CD14-positive monocyte (primary cell): ENCODE measurements at regions of chr9 and their contacts with region 1.

Region 1: GRCh38 chr9:93566408-93567270 is 9.7 kb upstream of the PHF2 start:
- DNase-seq: peak; percentile 96
- H3K4me3 ChIP-seq: peak overlapping the region; percentile 59 to 75 (median 65)
- H3K4me3 Mint-ChIP-seq: peak overlapping the region; percentile 79 to 90
- H3K27ac ChIP-seq: peak overlapping the region; percentile 91 to 99
- H3K27ac Mint-ChIP-seq: peak overlapping the region; percentile 90 to 96 (median 96)
- H3K4me1 ChIP-seq: peaks cover 30 to 34% of the 10 kb centered on the region in 2 donors
- H3K4me1 Mint-ChIP-seq: peaks cover 29% of the 10 kb centered on the region
- H3K27me3 ChIP-seq: no peaks in the 10 kb centered on the region
- H3K27me3 Mint-ChIP-seq: peaks cover 0 to 2% (median 1%) of the 10 kb centered on the region in 3 donors
- CTCF ChIP-seq: peak; percentile 92

Region 2: GRCh38 chr9:92669890-92670708 is 896.5 kb before region 1 on chr9 and contains the start of gene IPPK:
- intact Hi-C with region 1: loop called in 1 of 2 experiments (anchors 10 kb)
- DNase-seq: peak; percentile 98 to 99 (median 99)
- H3K4me3 ChIP-seq: peak within 1 kb of the TSS; percentile 69 to 97 (median 86)
- H3K4me3 Mint-ChIP-seq: peak within 1 kb of the TSS; percentile 92 to 95
- H3K27ac ChIP-seq: peak within 1 kb of the TSS; percentile 68 to 98
- H3K27ac Mint-ChIP-seq: peak within 1 kb of the TSS; percentile 92 to 97 (median 94)
- H3K4me1 ChIP-seq: peaks cover 13 to 23% of the 10 kb centered on the region in 2 donors
- H3K4me1 Mint-ChIP-seq: peaks cover 30% of the 10 kb centered on the region
- H3K27me3 ChIP-seq: no peaks in the 10 kb centered on the region
- H3K27me3 Mint-ChIP-seq: peaks cover 0 to 1% (median 0%) of the 10 kb centered on the region in 3 donors
- CTCF ChIP-seq: no peak
- polyA plus RNA-seq, gene IPPK: 1.9 to 11.6 (median 3.2) TPM

Region 3: DNA sequence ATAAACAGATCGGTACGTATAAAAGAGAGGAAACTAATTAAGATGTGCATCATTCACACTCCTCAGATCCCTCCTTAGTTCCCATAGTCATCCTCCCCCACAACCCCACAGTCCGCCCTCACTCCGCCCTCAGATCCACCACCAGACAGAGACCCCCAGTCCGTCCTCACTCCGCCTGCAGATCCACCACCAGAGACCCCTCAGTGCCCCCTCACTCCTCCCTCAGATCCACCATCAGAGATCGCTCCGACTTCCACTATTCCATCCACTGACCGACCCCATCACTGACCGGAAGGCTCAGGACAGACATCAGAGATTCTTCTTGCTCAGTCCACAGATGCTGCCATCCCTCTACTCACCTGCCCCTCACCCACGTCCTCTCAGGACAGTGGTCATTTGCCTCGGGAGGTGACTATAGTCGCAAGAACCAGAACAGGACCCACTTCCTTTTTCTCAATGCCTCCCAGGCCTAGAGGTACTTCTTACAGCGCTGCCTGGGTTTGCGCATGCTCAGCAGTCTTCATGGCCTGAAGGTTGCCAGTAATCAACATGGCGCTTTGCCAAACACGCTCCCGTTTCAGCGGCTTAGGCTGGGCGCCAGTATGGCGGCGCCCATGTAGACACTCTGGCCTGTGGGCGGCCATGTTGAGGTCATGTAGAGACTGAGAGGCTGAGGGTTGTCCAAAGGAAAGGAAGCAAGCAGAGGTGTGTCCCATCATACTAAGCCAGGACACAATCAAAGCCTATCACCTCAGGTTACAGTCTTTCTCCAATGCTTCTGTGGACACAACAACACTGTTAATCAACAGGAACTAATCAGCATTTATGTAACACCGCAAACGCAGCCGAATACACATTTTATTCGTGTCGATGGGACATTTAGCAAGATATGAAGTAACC is 688.9 kb before region 1 on chr9 and contains the start of gene ZNF484:
- intact Hi-C with region 1: loop called in 1 of 2 experiments (anchors 5 kb)
- DNase-seq: peak; percentile 99 to 100 (median 100)
- H3K4me3 ChIP-seq: peak within 1 kb of the TSS; percentile 59 to 99 (median 87)
- H3K4me3 Mint-ChIP-seq: peak within 1 kb of the TSS; percentile 100
- H3K27ac ChIP-seq: peak within 1 kb of the TSS; percentile 53 to 94
- H3K27ac Mint-ChIP-seq: peak within 1 kb of the TSS; percentile 92 to 100 (median 98)
- H3K4me1 ChIP-seq: no peaks in the 10 kb centered on the region
- H3K4me1 Mint-ChIP-seq: peaks cover 20% of the 10 kb centered on the region
- H3K27me3 ChIP-seq: no peaks in the 10 kb centered on the region
- H3K27me3 Mint-ChIP-seq: peaks cover 0 to 2% (median 1%) of the 10 kb centered on the region in 3 donors
- CTCF ChIP-seq: no peak
- polyA plus RNA-seq, gene ZNF484: 1.1 to 2.7 (median 1.8) TPM

Region 4: GRCh38 chr9:93453047-93453914 is 113.4 kb before region 1 on chr9 and contains the start of gene FAM120AOS:
- intact Hi-C with region 1: loop called in 1 of 2 experiments (anchors 5 kb)
- DNase-seq: peak; percentile 82 to 90 (median 90)
- H3K4me3 ChIP-seq: peak within 1 kb of the TSS; percentile 74 to 95 (median 79)
- H3K4me3 Mint-ChIP-seq: peak within 1 kb of the TSS; percentile 95 to 99
- H3K27ac ChIP-seq: peak within 1 kb of the TSS; percentile 87 to 90
- H3K27ac Mint-ChIP-seq: peak within 1 kb of the TSS; percentile 91 to 99 (median 96)
- H3K4me1 ChIP-seq: peaks cover 50 to 65% of the 10 kb centered on the region in 2 donors
- H3K4me1 Mint-ChIP-seq: peaks cover 52% of the 10 kb centered on the region
- H3K27me3 ChIP-seq: no peaks in the 10 kb centered on the region
- H3K27me3 Mint-ChIP-seq: no peaks in the 10 kb centered on the region
- CTCF ChIP-seq: no peak
- polyA plus RNA-seq, gene FAM120AOS: 33.2 to 47.7 (median 41.6) TPM

Region 5: GRCh38 chr9:93660352-93661051 is 93.9 kb after region 1 on chr9:
- intact Hi-C with region 1: no loop called
- DNase-seq: no peak
- H3K4me3 ChIP-seq: no peak overlapping the region
- H3K4me3 Mint-ChIP-seq: no peak overlapping the region
- H3K27ac ChIP-seq: no peak overlapping the region
- H3K27ac Mint-ChIP-seq: no peak overlapping the region
- H3K4me1 ChIP-seq: no peaks in the 10 kb centered on the region
- H3K4me1 Mint-ChIP-seq: no peaks in the 10 kb centered on the region
- H3K27me3 ChIP-seq: no peaks in the 10 kb centered on the region
- H3K27me3 Mint-ChIP-seq: peaks cover 0 to 5% (median 3%) of the 10 kb centered on the region in 3 donors
- CTCF ChIP-seq: no peak

Region 6: DNA sequence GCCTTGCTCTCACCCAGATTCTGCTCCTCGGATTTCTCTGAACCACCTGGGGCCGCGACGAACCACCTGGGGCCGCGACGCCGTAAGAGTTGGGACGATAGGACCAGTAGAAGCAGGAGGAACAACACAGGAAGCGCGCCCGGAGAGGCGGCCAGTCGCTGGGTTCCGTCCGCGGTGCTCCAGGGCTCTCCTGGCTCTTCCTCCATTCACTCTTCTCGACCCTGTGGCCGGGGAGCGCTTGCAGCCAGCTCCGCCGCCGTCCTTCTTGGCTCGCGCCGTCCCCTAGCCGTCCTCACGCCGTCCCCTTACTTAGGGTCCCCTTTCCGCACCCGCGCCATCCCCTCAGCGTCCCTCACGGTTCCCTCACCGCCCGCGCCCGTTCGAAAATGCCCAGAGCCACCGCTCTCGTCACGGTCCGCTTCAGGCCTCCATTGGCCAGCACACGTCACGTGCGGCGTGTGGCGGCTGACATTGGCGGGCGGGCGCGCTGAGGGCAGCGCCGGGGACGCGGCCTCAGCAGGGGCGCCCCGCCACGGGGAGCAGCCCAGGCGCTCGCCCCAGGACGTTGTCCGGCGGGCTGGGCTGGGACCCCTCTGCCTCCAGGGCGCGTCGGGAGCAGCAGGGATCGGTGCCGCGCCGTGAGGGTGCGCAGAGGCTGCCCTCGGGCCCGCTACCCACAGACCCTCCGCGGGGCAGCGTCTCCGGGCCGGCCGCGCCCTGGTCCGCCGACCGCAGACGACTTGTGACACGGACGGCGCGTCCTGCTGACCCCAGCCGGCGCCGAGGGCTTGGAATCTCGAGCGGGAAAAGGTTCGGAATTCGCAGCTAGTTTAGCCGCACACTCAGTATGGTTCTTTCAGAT is 463.9 kb after region 1 on chr9:
- intact Hi-C with region 1: loop called in 1 of 2 experiments (anchors 5 kb)
- DNase-seq: peak; percentile 72 to 82 (median 77)
- H3K4me3 ChIP-seq: peak overlapping the region; percentile 78 to 93 (median 81)
- H3K4me3 Mint-ChIP-seq: peak overlapping the region; percentile 96 to 99
- H3K27ac ChIP-seq: peak overlapping the region; percentile 67 to 82
- H3K27ac Mint-ChIP-seq: peak overlapping the region; percentile 88 to 96 (median 90)
- H3K4me1 ChIP-seq: peaks cover 11 to 14% of the 10 kb centered on the region in 2 donors
- H3K4me1 Mint-ChIP-seq: peaks cover 16% of the 10 kb centered on the region
- H3K27me3 ChIP-seq: peaks cover 6 to 7% of the 10 kb centered on the region in 2 donors
- H3K27me3 Mint-ChIP-seq: peaks cover 4 to 14% (median 11%) of the 10 kb centered on the region in 3 donors
- CTCF ChIP-seq: no peak